IMR-90 (cell line): ENCODE measurements at regions of chr10 and their contacts with region 1.

Region 1: DNA sequence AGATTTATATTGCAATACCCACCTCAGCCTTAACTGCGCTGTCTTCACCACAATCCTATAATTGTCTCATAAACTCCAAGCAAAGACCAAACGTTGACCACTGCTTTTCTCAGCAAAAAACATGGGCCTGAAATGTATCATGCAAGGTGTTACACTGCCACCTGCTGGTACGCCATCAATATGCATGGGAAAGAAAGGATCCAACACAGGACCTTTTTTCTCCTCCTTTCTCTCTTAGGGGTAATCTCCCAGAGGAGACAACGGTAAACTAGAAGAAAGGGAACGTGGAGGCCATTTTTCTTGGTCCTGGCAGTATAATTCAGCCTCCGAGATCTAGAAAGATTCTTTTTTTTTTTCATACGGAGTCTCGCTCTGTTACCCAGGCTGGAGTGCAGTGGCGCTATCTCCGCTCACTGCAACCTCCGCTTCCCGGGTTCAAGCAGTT is 79.1 kb upstream of the MPP7 start:
- DNase-seq: peak; percentile 91
- ATAC-seq: peak; percentile 93
- H3K4me3 ChIP-seq: no peak overlapping the region
- H3K27ac ChIP-seq: no peak overlapping the region
- H3K4me1 ChIP-seq: no peaks in the 10 kb centered on the region
- H3K27me3 ChIP-seq: peaks cover 13% of the 10 kb centered on the region
- CTCF ChIP-seq: peak; percentile 98
- POLR2A ChIP-seq: peak; percentile 64; the same call in 1 of the 2 replicates
- RAD21 ChIP-seq: peak; percentile 99

Region 2: GRCh38 chr10:27369880-27370279 is 1012.0 kb before region 1 on chr10:
- CTCF ChIA-PET with region 1: no interaction called
- POLR2A ChIA-PET with region 1: no interaction called
- dilution Hi-C with region 1: no loop called
- in situ Hi-C with region 1: no loop called
- intact Hi-C with region 1: loop called (anchors 2 kb)
- DNase-seq: no peak
- ATAC-seq: peak; percentile 37; the same call in 1 of the 2 replicates
- H3K4me3 ChIP-seq: no peak overlapping the region
- H3K27ac ChIP-seq: no peak overlapping the region
- H3K4me1 ChIP-seq: no peaks in the 10 kb centered on the region
- H3K27me3 ChIP-seq: no peaks in the 10 kb centered on the region; the same call in 1 of the 2 replicates
- CTCF ChIP-seq: 0 out of 2 replicates have a peak, but pooled peaks have one; percentile 29
- POLR2A ChIP-seq: no peak
- RAD21 ChIP-seq: peak; percentile 24; the same call in 1 of the 2 replicates

Region 3: DNA sequence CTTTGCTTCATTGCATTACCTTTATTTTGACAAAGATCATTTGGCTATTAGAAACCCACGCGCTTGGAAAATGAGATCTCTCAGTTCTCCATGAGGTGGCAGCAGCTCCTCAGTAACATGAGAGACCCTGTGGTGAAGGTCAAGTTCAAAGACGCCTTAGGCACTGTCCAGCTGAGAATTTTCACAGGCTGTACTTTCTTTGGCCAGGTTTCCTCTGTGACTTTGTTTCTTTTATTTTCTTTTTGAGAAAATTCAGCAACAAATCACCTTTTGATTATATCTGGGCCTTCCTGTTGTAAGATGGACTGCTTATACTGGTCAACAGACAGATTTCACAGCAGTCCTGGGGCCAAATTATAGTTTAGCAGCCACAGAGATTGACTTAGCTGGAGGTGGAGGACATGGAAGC is 823.3 kb before region 1 on chr10:
- CTCF ChIA-PET with region 1: no interaction called
- POLR2A ChIA-PET with region 1: no interaction called
- dilution Hi-C with region 1: no loop called
- in situ Hi-C with region 1: loop called (anchors 10 kb)
- intact Hi-C with region 1: loop called (anchors 5 kb)
- DNase-seq: peak; percentile 55
- ATAC-seq: peak; percentile 91
- H3K4me3 ChIP-seq: no peak overlapping the region
- H3K27ac ChIP-seq: no peak overlapping the region
- H3K4me1 ChIP-seq: no peaks in the 10 kb centered on the region
- H3K27me3 ChIP-seq: no peaks in the 10 kb centered on the region
- CTCF ChIP-seq: peak; percentile 80
- POLR2A ChIP-seq: no peak
- RAD21 ChIP-seq: peak; percentile 83

Region 4: GRCh38 chr10:27865221-27865638 is 516.7 kb before region 1 on chr10:
- CTCF ChIA-PET with region 1: no interaction called
- POLR2A ChIA-PET with region 1: no interaction called
- dilution Hi-C with region 1: no loop called
- in situ Hi-C with region 1: no loop called
- intact Hi-C with region 1: loop called (anchors 10 kb)
- DNase-seq: peak; percentile 23
- ATAC-seq: peak; percentile 62
- H3K4me3 ChIP-seq: no peak overlapping the region
- H3K27ac ChIP-seq: no peak overlapping the region
- H3K4me1 ChIP-seq: peaks cover 2% of the 10 kb centered on the region; the same call in 1 of the 2 replicates
- H3K27me3 ChIP-seq: no peaks in the 10 kb centered on the region
- CTCF ChIP-seq: peak; percentile 20; the same call in 1 of the 2 replicates
- POLR2A ChIP-seq: no peak
- RAD21 ChIP-seq: no peak

Region 5: GRCh38 chr10:28202941-28203352 is 179.0 kb before region 1 on chr10:
- CTCF ChIA-PET with region 1: no interaction called
- POLR2A ChIA-PET with region 1: no interaction called
- dilution Hi-C with region 1: no loop called
- in situ Hi-C with region 1: no loop called
- intact Hi-C with region 1: no loop called
- DNase-seq: no peak
- ATAC-seq: no peak; the same call in 1 of the 2 replicates
- H3K4me3 ChIP-seq: no peak overlapping the region
- H3K27ac ChIP-seq: peak overlapping the region; percentile 57
- H3K4me1 ChIP-seq: peaks cover 8% of the 10 kb centered on the region
- H3K27me3 ChIP-seq: no peaks in the 10 kb centered on the region
- CTCF ChIP-seq: no peak
- POLR2A ChIP-seq: no peak
- RAD21 ChIP-seq: no peak

Region 6: GRCh38 chr10:28250782-28251181 is 131.1 kb before region 1 on chr10:
- CTCF ChIA-PET with region 1: interaction called, 41 read pairs
- POLR2A ChIA-PET with region 1: no interaction called
- dilution Hi-C with region 1: loop called (anchors 25 kb)
- in situ Hi-C with region 1: loop called (anchors 5 kb)
- intact Hi-C with region 1: loop called (anchors 1 kb)
- DNase-seq: peak; percentile 51
- ATAC-seq: peak; percentile 59
- H3K4me3 ChIP-seq: no peak overlapping the region
- H3K27ac ChIP-seq: no peak overlapping the region
- H3K4me1 ChIP-seq: peaks cover 5% of the 10 kb centered on the region; the same call in 1 of the 2 replicates
- H3K27me3 ChIP-seq: peaks cover 6% of the 10 kb centered on the region; the same call in 1 of the 2 replicates
- CTCF ChIP-seq: peak; percentile 67
- POLR2A ChIP-seq: no peak
- RAD21 ChIP-seq: peak; percentile 71